Head of caudate nucleus (tissue), 42 donors: ENCODE measurements at regions of chr14 and their contacts with region 1.

Region 1: GRCh38 chr14:26394150-26394810 is 203.6 kb downstream of the NOVA1 start:
- DNase-seq: peak in 6 of 42 donors; percentile 17 to 49 (median 36)

Region 2: DNA sequence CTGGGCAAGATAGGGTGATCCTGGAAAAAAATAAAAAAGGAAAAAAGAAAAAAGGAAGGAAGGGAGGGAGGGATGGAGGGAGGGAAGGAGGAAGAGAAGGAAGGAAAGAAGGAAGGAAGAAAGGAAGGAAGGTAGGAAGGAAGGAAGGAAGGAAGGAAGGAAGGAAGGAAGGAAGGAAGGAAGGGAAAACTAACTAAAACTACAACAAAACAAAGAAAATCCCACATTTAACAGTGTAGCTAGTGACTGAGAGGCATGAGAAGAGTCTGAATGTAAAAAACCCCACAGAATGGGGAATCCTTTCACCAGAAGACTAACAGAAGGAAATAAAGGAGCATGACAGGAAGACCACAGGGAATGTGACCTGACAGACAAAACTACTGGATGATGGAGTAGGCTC is 142.1 kb before region 1 on chr14:
- intact Hi-C with region 1: no loop called
- DNase-seq: no peak

Region 3: DNA sequence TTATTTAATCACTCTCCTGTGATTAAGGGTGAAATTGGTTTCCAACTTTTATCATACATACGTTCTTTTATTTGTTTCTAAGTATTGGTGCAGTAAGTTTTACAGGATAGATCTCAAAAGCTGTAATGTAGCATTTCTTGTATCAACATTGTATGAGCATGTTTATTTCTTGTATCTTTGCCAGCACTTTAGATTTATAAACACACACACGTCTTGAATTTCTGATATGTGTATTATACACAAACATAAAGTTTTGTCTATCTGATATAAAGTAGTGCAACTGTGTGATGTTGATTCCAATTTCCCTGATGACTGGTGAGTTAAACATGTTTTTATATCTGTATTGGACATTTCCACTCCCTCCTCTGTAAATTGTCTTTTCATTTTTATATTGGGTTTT is 68.9 kb after region 1 on chr14:
- intact Hi-C with region 1: no loop called
- DNase-seq: no peak

Region 4: GRCh38 chr14:26730929-26731618 is 336.8 kb after region 1 on chr14:
- intact Hi-C with region 1: loop called (anchors 10 kb)
- DNase-seq: peak in 38 of 42 donors; percentile 4 to 63 (median 24)

Region 5: GRCh38 chr14:26984311-26985177 is 590.3 kb after region 1 on chr14:
- intact Hi-C with region 1: loop called (anchors 10 kb)
- DNase-seq: peak; percentile 21 to 92 (median 74)